Endothelial cell of umbilical vein (primary cell): ENCODE measurements at regions of chr9 and their contacts with region 1.

Region 1: DNA sequence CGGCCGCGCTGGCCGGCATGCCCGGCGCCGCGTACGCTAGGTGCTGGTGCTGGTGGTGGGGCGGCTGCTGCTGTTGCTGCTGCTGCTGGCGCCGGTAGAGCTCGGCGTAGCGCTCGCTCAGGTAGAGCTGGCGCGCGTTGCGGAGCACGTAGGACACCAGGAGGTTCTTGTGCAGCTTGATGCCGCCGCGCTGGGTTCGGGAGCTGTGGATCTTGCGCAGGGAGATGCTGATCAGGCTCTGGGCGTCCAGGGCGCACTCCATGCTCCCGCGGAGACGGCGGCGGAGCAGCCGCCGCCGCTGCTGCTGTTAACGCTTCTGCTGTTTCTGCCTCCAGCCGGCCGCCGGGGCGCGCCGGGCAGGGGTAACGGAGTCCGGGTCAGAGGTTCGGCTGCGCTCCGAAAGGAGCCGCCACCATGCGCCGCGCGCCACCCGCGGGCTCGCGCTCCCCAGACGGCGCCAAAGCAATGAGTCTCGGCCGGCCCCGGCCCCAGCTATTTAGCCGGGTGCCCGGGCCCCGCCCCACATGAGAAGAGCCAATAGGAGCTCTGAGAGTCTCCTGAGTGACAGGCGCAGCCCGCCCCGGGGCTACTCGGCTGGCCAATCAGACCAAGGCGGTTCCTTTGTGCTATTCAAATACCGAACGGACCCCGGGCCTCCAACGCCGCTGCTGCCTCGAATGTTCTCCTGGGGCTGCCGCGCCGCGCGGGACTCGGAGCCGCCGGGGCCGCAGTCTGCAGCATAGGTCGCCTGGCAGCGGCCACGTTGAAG is at the start of gene IER5L:
- DNase-seq: peak; percentile 90
- H3K4me3 ChIP-seq: peak within 1 kb of the TSS; percentile 74 to 81 (median 79)
- H3K27ac ChIP-seq: no peak within 1 kb of the TSS
- H3K4me1 ChIP-seq: peaks cover 21% of the 10 kb centered on the region
- H3K27me3 ChIP-seq: no peaks in the 10 kb centered on the region
- CTCF ChIP-seq: no peak
- POLR2A ChIP-seq: peak; percentile 100
- total RNA-seq, gene IER5L: 12.3 and 13.3 TPM in 2 replicates

Region 2: DNA sequence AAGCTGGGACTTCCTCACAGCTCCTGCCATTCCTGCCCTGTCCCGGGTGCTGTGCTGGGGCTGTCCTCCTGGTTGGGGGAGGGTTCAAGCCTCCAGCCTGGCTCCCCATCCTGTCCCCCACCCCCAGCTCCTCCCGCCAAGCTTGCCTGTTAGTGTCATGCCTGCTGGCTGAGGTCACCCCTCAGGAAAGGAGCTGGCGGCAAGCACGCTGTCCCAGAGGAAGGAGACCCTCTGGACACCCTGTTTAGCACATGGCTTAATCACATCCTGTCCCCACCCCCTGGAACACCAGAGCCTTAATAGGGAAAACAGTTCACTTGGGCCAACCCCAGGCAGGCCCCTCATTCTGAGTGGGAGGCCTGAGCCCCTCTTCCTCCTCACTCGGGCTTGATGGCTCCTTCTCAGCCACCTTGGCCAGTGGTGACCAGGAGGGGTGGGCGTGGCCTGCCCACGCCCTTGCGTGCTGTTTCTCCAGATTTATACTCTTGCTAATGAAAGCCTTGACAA is 266.4 kb before region 1 on chr9:
- CTCF ChIA-PET with region 1: no interaction called
- POLR2A ChIA-PET with region 1: no interaction called
- dilution Hi-C with region 1: no loop called
- intact Hi-C with region 1: no loop called
- DNase-seq: peak; percentile 85
- H3K4me3 ChIP-seq: no peak overlapping the region
- H3K27ac ChIP-seq: peak overlapping the region; percentile 94
- H3K4me1 ChIP-seq: peaks cover 58% of the 10 kb centered on the region
- H3K27me3 ChIP-seq: no peaks in the 10 kb centered on the region
- CTCF ChIP-seq: no peak
- POLR2A ChIP-seq: no peak

Region 3: GRCh38 chr9:128987805-128988204 is 190.2 kb before region 1 on chr9:
- CTCF ChIA-PET with region 1: no interaction called
- POLR2A ChIA-PET with region 1: no interaction called
- dilution Hi-C with region 1: no loop called
- intact Hi-C with region 1: no loop called
- DNase-seq: no peak
- H3K4me3 ChIP-seq: no peak overlapping the region
- H3K27ac ChIP-seq: no peak overlapping the region
- H3K4me1 ChIP-seq: no peaks in the 10 kb centered on the region
- H3K27me3 ChIP-seq: no peaks in the 10 kb centered on the region
- CTCF ChIP-seq: no peak
- POLR2A ChIP-seq: no peak

Region 4: GRCh38 chr9:129150672-129151211 is 27.2 kb before region 1 on chr9:
- CTCF ChIA-PET with region 1: interaction called, 287 read pairs
- POLR2A ChIA-PET with region 1: interaction called, 11 read pairs
- dilution Hi-C with region 1: no loop called
- intact Hi-C with region 1: no loop called
- DNase-seq: no peak
- H3K4me3 ChIP-seq: no peak overlapping the region
- H3K27ac ChIP-seq: no peak overlapping the region
- H3K4me1 ChIP-seq: peaks cover under 1% of the 10 kb centered on the region
- H3K27me3 ChIP-seq: no peaks in the 10 kb centered on the region
- CTCF ChIP-seq: no peak
- POLR2A ChIP-seq: no peak

Region 5: GRCh38 chr9:129258124-129258822 is 80.3 kb after region 1 on chr9:
- CTCF ChIA-PET with region 1: interaction called, 3 read pairs
- POLR2A ChIA-PET with region 1: interaction called, 3 read pairs
- dilution Hi-C with region 1: no loop called
- intact Hi-C with region 1: loop called (anchors 1 kb)
- DNase-seq: peak; percentile 75
- H3K4me3 ChIP-seq: peak overlapping the region in 1 of 3 experiments; percentile 11
- H3K27ac ChIP-seq: no peak overlapping the region
- H3K4me1 ChIP-seq: peaks cover 9% of the 10 kb centered on the region
- H3K27me3 ChIP-seq: peaks cover 6 to 8% of the 10 kb centered on the region in 2 experiments
- CTCF ChIP-seq: no peak
- POLR2A ChIP-seq: no peak

Region 6: DNA sequence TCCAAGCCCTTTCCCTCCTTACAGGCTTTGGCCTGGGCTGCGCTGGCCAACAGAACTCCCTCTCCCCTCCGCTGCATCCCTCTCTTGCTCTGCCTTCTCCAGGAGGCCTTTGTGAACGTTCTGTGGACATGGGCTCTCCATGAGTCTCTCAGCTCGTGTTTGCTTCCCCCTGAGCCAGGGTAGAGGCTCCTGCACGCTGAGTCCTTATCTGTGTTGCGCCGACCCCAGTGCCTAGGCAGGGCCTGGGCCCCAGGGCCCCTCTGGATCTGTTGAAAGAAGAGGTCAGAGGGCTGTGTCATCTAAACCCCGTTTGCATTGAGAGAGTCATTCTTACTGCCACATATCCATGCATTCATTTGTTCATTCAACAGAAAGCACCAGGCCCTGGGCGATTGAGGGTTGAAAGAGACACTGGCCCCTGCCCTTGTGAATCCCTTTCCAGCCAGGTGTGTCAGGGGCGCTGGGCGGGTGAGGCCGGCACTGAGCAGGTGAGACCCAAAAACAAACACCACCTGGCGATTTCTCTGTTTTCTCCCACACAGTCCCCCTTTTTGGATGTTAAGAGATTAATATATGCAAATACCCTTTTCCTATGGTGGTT is 111.3 kb after region 1 on chr9:
- CTCF ChIA-PET with region 1: no interaction called
- POLR2A ChIA-PET with region 1: no interaction called
- dilution Hi-C with region 1: no loop called
- intact Hi-C with region 1: no loop called
- DNase-seq: no peak
- H3K4me3 ChIP-seq: no peak overlapping the region
- H3K27ac ChIP-seq: no peak overlapping the region
- H3K4me1 ChIP-seq: no peaks in the 10 kb centered on the region
- H3K27me3 ChIP-seq: peaks cover 0 to 2% of the 10 kb centered on the region in 2 experiments
- CTCF ChIP-seq: no peak
- POLR2A ChIP-seq: no peak

Region 7: DNA sequence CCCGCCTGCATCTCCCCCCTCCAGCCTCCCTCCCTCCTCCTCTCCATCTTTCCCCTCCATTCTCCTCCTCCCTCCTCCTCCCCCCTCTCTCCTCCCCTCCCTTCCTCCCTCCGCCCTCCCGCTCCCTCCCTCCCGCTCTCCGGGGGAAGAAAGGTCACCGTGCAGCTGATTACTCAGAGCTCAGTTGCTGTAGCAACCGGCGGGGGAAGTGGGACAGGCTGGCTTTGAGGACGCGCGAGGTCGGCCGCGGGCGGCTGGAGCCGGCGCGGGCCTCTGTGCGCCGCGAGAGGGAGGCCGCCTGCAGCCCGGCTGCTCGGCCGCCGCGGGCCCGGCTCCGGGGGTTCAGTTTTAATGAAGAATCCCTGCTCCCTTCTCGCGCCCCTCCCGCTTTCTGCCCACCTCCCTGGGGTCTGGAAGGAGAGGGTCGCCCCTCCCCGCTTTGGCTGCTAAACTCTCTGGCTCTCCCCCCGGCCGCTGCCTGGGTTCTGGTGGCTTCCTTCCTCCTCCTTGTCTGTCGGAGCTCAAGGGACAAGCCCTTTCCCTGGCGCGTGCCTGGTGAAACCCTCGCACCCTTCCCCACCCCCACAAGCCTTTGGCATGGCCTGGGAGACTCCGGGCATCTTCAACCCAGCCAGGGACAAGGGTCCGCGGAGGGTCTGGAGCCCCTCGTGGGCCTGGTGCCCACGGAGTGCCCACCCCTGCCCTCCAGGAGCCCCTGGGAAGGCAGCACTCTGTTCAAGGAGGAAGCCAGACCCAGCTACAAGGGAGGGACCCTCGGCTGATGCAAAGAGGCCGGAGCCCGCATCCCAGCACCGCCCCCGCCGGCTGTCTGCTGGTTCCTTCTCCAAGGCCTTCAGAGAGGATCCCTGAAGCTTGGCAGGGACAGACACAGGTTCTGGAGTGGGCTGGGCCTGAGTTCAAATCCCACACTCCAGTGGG is 282.6 kb after region 1 on chr9:
- CTCF ChIA-PET with region 1: interaction called, 7 read pairs
- POLR2A ChIA-PET with region 1: interaction called, 10 read pairs
- dilution Hi-C with region 1: no loop called
- intact Hi-C with region 1: loop called (anchors 1 kb)
- DNase-seq: peak; percentile 96
- H3K4me3 ChIP-seq: peak overlapping the region in 2 of 3 experiments; percentile 16 to 18
- H3K27ac ChIP-seq: peak overlapping the region; percentile 98
- H3K4me1 ChIP-seq: peaks cover 11% of the 10 kb centered on the region
- H3K27me3 ChIP-seq: no peaks in the 10 kb centered on the region
- CTCF ChIP-seq: no peak
- POLR2A ChIP-seq: no peak

Region 8: GRCh38 chr9:129569502-129570449 is 391.8 kb after region 1 on chr9:
- CTCF ChIA-PET with region 1: interaction called, 12 read pairs
- POLR2A ChIA-PET with region 1: interaction called, 3 read pairs
- dilution Hi-C with region 1: no loop called
- intact Hi-C with region 1: loop called (anchors 2 kb)
- DNase-seq: peak; percentile 30
- H3K4me3 ChIP-seq: no peak overlapping the region
- H3K27ac ChIP-seq: no peak overlapping the region
- H3K4me1 ChIP-seq: peaks cover 2% of the 10 kb centered on the region
- H3K27me3 ChIP-seq: no peaks in the 10 kb centered on the region
- CTCF ChIP-seq: peak; percentile 22 to 48
- POLR2A ChIP-seq: no peak

Region 9: GRCh38 chr9:129617167-129617566 is 439.2 kb after region 1 on chr9:
- CTCF ChIA-PET with region 1: interaction called, 11 read pairs
- POLR2A ChIA-PET with region 1: interaction called, 3 read pairs
- dilution Hi-C with region 1: no loop called
- intact Hi-C with region 1: no loop called
- DNase-seq: peak; percentile 31
- H3K4me3 ChIP-seq: no peak overlapping the region
- H3K27ac ChIP-seq: no peak overlapping the region
- H3K4me1 ChIP-seq: no peaks in the 10 kb centered on the region
- H3K27me3 ChIP-seq: peaks cover 0 to 8% of the 10 kb centered on the region in 2 experiments
- CTCF ChIP-seq: peak; percentile 41 to 46
- POLR2A ChIP-seq: no peak